A549 (cell line): ENCODE measurements at regions of chr9 and their contacts with region 1.

Region 1: DNA sequence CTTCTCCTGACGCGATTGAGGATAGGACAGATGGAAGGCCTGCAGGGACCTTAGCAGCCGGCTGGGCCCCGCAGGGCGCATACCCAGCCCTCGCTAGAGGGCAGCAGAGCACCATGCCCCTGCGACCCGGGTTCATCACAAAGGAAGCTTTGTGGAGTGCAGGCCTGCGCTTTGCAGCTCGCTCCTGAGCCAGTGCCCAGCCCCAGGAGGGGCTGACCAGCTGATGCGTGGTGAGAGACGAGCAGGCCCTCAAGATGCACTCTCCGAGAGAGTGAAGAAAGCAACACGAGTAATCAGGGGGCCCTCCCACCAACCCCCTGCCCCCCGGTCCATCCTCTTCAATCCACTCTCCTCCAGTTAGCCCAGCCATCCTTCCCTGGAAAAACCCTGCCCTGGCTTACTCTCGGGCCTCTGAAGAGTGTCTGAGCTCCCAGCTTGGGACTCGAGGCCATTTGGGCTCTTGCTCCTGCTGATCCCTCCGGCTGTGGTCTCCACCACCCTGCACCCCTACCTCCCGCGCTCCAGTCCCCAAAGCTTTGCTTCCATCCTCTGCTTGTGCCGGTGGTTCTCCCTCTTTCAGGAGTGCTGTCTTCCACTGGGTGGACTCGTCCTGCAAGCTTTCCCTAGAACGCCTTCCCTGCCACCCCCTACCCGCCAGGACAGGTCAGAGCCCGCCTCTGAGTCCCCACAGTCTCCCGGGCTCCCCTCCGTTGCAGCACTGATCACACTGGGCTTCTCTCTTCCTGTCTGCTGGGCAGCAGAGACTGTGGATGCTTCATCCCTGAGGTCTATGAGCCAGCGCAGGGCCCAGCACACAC is 9.1 kb upstream of the KIF12 start:
- DNase-seq: peak; percentile 83 to 91
- ATAC-seq: peak; percentile 97 to 99
- H3K4me3 ChIP-seq: no peak overlapping the region
- H3K27ac ChIP-seq: peak overlapping the region; percentile 39 to 73; a peak in 5 of 6 replicates
- H3K4me1 ChIP-seq: peaks cover 38% of the 10 kb centered on the region
- CTCF ChIP-seq: peak; percentile 92
- EP300 ChIP-seq: no peak
- POLR2A ChIP-seq: no peak
- RAD21 ChIP-seq: peak; percentile 97

Region 2: DNA sequence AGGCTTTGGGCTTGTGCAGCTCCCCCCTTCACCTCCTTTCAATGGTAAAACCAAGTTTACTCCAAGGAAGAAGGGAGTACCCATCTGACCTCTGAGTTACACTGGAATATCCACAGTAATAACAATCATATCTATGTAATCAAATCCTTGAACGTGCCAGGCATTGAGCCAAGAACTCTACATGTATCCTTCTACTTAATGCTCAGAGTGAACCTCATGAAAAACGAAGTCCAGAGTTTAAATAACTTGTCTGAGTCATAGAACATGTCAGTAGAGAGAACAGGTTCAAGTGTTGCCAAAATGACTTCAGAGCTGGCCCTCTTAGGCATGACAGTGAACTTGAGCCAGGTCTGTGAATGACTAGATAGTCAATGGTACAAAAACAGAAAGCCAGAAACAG is 396.2 kb before region 1 on chr9:
- CTCF ChIA-PET with region 1: no interaction called
- POLR2A ChIA-PET with region 1: no interaction called
- DNase-seq: peak in 1 of 2 experiments; percentile 14
- ATAC-seq: no peak
- H3K4me3 ChIP-seq: no peak overlapping the region
- H3K27ac ChIP-seq: no peak overlapping the region
- H3K4me1 ChIP-seq: no peaks in the 10 kb centered on the region
- CTCF ChIP-seq: no peak
- EP300 ChIP-seq: no peak
- POLR2A ChIP-seq: no peak
- RAD21 ChIP-seq: no peak

Region 3: GRCh38 chr9:114124138-114124537 is 15.9 kb after region 1 on chr9:
- CTCF ChIA-PET with region 1: interaction called, 54 read pairs
- POLR2A ChIA-PET with region 1: no interaction called
- DNase-seq: no peak
- ATAC-seq: no peak
- H3K4me3 ChIP-seq: no peak overlapping the region
- H3K27ac ChIP-seq: no peak overlapping the region
- H3K4me1 ChIP-seq: peaks cover 5% of the 10 kb centered on the region; the same call in 2 of the 3 replicates
- CTCF ChIP-seq: no peak
- EP300 ChIP-seq: no peak
- POLR2A ChIP-seq: no peak
- RAD21 ChIP-seq: no peak

Region 4: GRCh38 chr9:114163517-114163951 is 55.3 kb after region 1 on chr9:
- CTCF ChIA-PET with region 1: interaction called, 157 read pairs
- POLR2A ChIA-PET with region 1: no interaction called
- DNase-seq: peak; percentile 25 to 28
- ATAC-seq: peak; percentile 65 to 69; a peak in 5 of 6 replicates
- H3K4me3 ChIP-seq: no peak overlapping the region; the same call in 2 of the 3 replicates
- H3K27ac ChIP-seq: peak overlapping the region; percentile 46 to 77
- H3K4me1 ChIP-seq: peaks cover 28% of the 10 kb centered on the region
- CTCF ChIP-seq: no peak
- EP300 ChIP-seq: no peak
- POLR2A ChIP-seq: no peak
- RAD21 ChIP-seq: no peak

Region 5: GRCh38 chr9:114233491-114234185 is 125.4 kb after region 1 on chr9:
- CTCF ChIA-PET with region 1: interaction called, 34 read pairs
- POLR2A ChIA-PET with region 1: no interaction called
- DNase-seq: no peak
- ATAC-seq: no peak
- H3K4me3 ChIP-seq: no peak overlapping the region
- H3K27ac ChIP-seq: no peak overlapping the region
- H3K4me1 ChIP-seq: no peaks in the 10 kb centered on the region
- CTCF ChIP-seq: no peak
- EP300 ChIP-seq: no peak
- POLR2A ChIP-seq: no peak
- RAD21 ChIP-seq: no peak

Region 6: GRCh38 chr9:114271641-114272081 is 163.4 kb after region 1 on chr9:
- CTCF ChIA-PET with region 1: interaction called, 37 read pairs
- POLR2A ChIA-PET with region 1: no interaction called
- DNase-seq: peak in 1 of 2 experiments; percentile 42
- ATAC-seq: peak in 1 of 2 experiments; percentile 70; a peak in 3 of 6 replicates
- H3K4me3 ChIP-seq: no peak overlapping the region
- H3K27ac ChIP-seq: no peak overlapping the region
- H3K4me1 ChIP-seq: peaks cover 14% of the 10 kb centered on the region
- CTCF ChIP-seq: peak; percentile 41
- EP300 ChIP-seq: no peak
- POLR2A ChIP-seq: no peak
- RAD21 ChIP-seq: peak; percentile 63 to 64

Region 7: GRCh38 chr9:114299286-114300152 is 191.3 kb after region 1 on chr9:
- CTCF ChIA-PET with region 1: interaction called, 216 read pairs
- POLR2A ChIA-PET with region 1: no interaction called
- DNase-seq: no peak
- ATAC-seq: no peak
- H3K4me3 ChIP-seq: no peak overlapping the region
- H3K27ac ChIP-seq: no peak overlapping the region
- H3K4me1 ChIP-seq: no peaks in the 10 kb centered on the region
- CTCF ChIP-seq: no peak
- EP300 ChIP-seq: no peak
- POLR2A ChIP-seq: no peak
- RAD21 ChIP-seq: no peak